ENCODE measurements at regions of chr6 and their contacts with region 1.

Region 1: DNA sequence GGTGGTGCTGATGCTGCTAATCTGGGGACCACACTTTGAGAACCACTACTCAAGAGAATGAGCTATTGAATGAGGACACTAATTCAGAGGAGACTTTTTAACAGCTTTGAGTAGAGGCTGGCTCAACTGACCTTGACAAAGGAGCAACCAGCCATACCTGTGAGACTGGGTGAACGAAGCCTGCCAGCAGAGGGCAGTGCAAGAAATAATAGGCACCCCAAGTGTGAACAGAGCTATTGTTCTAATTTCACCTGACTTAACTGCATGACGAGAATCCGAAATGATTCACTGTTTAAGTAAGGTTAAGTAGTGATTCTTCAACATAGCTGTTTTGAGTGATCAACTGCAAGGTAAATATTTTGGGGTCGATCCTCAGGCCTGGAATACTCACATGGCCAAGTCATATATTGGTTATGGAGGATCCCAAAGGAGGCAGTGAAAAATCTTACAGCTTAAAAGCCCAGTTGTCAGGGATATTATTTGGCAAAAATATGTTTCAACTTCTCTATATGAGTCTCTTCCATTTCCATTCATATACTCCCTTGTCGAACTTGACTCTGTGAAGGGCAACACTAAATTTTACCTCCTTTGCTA is 550.5 kb upstream of the MARCKS start:
- DNase-seq: peak; percentile 36
- H3K4me3 ChIP-seq: no peak overlapping the region
- H3K27ac ChIP-seq: no peak overlapping the region
- H3K4me1 ChIP-seq: no peaks in the 10 kb centered on the region
- H3K27me3 ChIP-seq: no peaks in the 10 kb centered on the region
- CTCF ChIP-seq: peak; percentile 77

Region 2: DNA sequence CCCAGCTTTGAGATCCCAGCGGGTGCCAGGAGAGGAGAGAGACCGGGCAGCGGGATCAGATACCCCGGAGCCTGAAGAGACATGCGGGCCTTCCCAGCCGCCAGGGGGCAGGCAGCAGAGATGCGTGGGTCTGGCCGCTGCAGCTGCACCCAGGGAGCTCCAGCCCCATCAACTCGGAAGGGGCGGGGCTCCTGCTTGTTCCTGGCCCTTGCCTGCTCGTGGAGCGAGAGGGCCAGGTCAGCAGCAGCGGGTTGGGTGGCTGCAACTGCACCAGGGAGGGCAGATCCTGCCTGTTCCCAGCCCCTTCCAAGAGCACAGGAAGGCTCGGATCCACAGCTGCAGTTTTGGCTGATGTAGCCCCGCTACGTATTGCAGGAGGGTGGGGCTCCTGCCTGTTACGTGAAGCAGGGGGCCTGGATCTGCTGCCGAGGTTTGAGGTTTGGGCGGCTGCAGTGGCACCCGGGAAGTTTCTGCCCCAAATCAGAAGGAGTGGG is 426.7 kb before region 1 on chr6:
- CTCF ChIA-PET with region 1: interaction called, 13 read pairs
- POLR2A ChIA-PET with region 1: no interaction called
- intact Hi-C with region 1: no loop called
- DNase-seq: no peak
- H3K4me3 ChIP-seq: no peak overlapping the region
- H3K27ac ChIP-seq: no peak overlapping the region
- H3K4me1 ChIP-seq: peaks cover 10% of the 10 kb centered on the region
- H3K27me3 ChIP-seq: no peaks in the 10 kb centered on the region
- CTCF ChIP-seq: no peak

Region 3: GRCh38 chr6:113344969-113345368 is 38.3 kb after region 1 on chr6:
- CTCF ChIA-PET with region 1: no interaction called
- POLR2A ChIA-PET with region 1: no interaction called
- intact Hi-C with region 1: no loop called
- DNase-seq: no peak
- H3K4me3 ChIP-seq: no peak overlapping the region
- H3K27ac ChIP-seq: no peak overlapping the region
- H3K4me1 ChIP-seq: no peaks in the 10 kb centered on the region
- H3K27me3 ChIP-seq: no peaks in the 10 kb centered on the region
- CTCF ChIP-seq: no peak

Region 4: GRCh38 chr6:113540466-113540865 is 233.8 kb after region 1 on chr6:
- CTCF ChIA-PET with region 1: no interaction called
- POLR2A ChIA-PET with region 1: no interaction called
- intact Hi-C with region 1: no loop called
- DNase-seq: no peak
- H3K4me3 ChIP-seq: no peak overlapping the region
- H3K27ac ChIP-seq: no peak overlapping the region
- H3K4me1 ChIP-seq: no peaks in the 10 kb centered on the region
- H3K27me3 ChIP-seq: no peaks in the 10 kb centered on the region
- CTCF ChIP-seq: no peak

Region 5: DNA sequence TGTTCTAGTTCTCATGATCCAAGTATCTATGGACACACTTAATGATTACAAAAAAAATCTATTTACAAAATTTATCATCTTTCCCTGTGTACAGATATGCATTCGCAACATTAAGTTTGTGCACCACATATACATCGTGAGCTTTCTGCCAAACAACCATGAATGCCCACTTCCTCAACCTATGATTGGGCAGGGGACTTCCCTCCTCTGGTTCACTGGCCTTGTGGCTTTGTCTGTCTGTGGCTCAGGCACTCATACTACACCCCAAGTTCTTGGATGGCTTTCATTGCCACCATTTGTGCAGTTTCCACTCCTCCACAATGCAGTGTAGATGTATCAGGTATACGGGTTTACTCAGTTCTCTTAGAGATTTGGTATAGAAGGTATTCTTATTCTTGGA is 961.2 kb after region 1 on chr6:
- CTCF ChIA-PET with region 1: no interaction called
- POLR2A ChIA-PET with region 1: no interaction called
- intact Hi-C with region 1: no loop called
- DNase-seq: no peak
- H3K4me3 ChIP-seq: no peak overlapping the region
- H3K27ac ChIP-seq: no peak overlapping the region
- H3K4me1 ChIP-seq: no peaks in the 10 kb centered on the region
- H3K27me3 ChIP-seq: peaks cover 3% of the 10 kb centered on the region
- CTCF ChIP-seq: no peak

Region 6: GRCh38 chr6:114592506-114592905 is 1285.9 kb after region 1 on chr6:
- CTCF ChIA-PET with region 1: no interaction called
- POLR2A ChIA-PET with region 1: no interaction called
- intact Hi-C with region 1: no loop called
- DNase-seq: no peak
- H3K4me3 ChIP-seq: no peak overlapping the region
- H3K27ac ChIP-seq: no peak overlapping the region
- H3K4me1 ChIP-seq: no peaks in the 10 kb centered on the region
- H3K27me3 ChIP-seq: peaks cover 2% of the 10 kb centered on the region
- CTCF ChIP-seq: no peak